GM10248 (cell line): ENCODE measurements at regions of chr5 and their contacts with region 1.

Region 1: DNA sequence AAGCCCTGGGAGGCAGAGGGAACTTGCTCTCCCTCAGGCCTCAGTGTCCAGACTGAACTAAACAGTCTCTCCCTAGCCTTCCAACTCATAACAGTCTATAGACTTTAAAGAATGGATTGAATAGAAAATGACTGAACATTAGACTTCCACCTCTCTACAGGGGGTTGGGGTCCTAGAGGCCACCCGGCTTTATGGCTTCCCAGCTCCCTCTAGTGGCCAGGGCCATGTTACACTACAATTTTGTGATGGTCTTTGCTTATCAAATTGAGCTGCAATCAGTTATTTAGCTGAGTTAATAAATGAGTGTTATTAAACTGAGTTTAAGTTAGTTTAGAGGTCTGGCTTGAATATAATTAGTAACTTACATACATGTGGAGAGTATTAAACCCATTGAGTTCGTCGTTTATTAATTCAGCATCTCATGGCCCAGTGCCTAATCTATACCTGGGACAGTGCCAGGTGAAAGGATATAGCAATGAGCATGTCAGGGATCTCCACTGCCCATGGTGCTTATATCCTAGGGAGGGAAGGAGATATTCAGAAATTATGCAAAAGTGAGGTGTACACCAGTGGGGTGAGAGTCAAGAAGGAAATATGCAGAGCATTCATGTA is 105.2 kb downstream of the SH3TC2 start:
- DNase-seq: peak; percentile 54
- CTCF ChIP-seq: peak; percentile 62

Region 2: DNA sequence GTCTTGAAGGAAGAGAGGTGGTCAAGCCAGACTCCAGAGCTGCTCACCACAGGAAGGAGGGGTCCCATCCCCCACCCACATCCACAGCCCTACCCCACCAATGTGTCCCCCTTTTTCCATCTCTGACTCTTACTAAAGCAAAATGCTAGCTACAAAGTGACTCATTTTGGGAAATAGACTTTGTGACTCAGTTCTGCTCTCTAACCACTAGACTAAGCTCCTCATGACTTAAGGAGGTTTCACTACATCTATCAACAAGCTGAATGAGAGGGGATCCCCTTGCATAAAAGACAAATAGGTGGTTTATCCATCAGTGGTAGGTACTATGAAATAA is 166.4 kb before region 1 on chr5:
- CTCF ChIA-PET with region 1: interaction called, 10 read pairs
- POLR2A ChIA-PET with region 1: no interaction called
- DNase-seq: peak; percentile 43
- CTCF ChIP-seq: no peak

Region 3: DNA sequence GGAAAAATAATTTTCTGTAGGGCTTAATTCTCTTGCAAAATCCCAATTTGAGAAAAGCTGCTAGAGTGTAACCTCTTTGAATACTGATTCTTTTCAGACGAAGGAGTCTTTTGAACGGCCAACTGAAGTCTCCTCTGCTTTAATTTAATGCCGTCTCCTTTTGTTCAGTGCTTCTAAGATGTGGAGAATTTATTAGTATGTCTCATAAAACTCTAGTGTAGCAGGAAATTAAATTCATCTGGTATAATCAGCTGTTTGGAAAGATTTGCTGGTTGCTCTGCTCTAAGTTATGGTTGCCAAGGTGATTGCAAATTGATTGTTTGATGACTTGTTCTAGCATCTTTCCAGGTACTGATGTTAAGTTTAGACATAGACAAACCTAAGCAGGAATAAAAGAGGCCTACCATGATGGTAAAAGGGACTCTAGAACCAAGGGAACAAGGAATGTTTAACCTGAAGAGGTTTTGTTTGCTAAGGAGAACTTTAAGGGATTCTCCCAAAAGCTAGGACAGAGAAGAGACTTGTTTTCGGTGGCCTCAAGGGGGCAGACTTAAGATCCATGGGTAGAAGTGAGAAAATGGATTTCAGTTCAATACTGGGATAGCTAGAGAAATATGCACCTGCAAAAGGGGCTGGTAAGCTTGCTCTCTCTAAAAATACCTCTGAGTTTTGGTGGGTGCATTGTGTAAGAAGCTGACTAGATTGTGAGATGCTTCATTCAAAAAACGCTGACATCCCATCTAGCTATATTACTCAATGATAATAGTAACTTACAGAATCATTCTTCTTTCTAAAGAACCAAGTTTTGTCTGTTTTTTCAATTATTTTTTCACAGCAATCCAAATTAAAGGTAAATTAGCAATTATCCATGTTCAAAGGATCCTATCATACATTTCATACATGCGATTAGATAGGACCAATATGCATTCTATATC is 137.0 kb before region 1 on chr5:
- CTCF ChIA-PET with region 1: interaction called, 11 read pairs
- POLR2A ChIA-PET with region 1: no interaction called
- DNase-seq: no peak
- CTCF ChIP-seq: peak; percentile 52

Region 4: DNA sequence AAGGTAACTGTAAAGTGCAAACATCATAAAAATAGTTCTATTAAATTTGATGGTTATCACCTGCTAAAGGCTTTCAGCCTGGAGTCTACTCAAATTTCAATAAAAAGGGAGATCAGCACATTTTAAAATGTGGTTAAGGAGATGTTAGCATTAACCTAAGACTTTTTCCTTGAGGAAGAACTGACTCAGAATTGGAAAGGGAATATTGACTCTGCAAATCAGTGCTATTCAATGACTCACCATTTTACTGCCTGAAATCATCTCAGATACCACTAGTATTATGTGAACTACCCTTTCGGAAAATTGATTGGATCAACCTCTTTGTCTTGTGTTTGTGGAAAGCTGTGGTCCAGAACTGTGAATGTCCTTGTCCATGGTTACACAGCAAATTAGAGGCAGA is 18.0 kb before region 1 on chr5:
- CTCF ChIA-PET with region 1: interaction called, 11 read pairs
- POLR2A ChIA-PET with region 1: no interaction called
- DNase-seq: no peak
- CTCF ChIP-seq: no peak

Region 5: GRCh38 chr5:148972958-148973357 is 15.3 kb after region 1 on chr5:
- CTCF ChIA-PET with region 1: interaction called, 21 read pairs
- POLR2A ChIA-PET with region 1: no interaction called
- DNase-seq: no peak
- CTCF ChIP-seq: no peak

Region 6: DNA sequence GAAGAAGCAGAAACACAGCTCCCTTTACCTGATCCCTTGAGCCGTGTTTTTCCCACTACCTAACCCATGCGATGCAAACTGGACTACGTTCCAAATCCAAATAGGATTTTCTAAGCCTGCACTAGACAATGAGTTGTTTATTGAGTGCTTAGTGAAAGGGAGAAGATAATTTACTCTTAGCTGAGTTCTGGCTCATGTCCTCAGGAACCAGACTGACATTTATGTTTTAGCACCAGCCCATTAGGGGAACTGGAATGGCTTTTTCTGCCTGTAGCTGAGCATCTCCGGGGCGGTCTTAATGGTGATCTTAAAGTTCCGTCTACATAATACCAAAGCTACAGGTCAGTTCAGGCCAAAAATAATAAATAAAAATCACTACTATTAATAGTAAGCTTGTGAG is 23.7 kb after region 1 on chr5:
- CTCF ChIA-PET with region 1: interaction called, 21 read pairs
- POLR2A ChIA-PET with region 1: no interaction called
- DNase-seq: no peak
- CTCF ChIP-seq: no peak

Region 7: DNA sequence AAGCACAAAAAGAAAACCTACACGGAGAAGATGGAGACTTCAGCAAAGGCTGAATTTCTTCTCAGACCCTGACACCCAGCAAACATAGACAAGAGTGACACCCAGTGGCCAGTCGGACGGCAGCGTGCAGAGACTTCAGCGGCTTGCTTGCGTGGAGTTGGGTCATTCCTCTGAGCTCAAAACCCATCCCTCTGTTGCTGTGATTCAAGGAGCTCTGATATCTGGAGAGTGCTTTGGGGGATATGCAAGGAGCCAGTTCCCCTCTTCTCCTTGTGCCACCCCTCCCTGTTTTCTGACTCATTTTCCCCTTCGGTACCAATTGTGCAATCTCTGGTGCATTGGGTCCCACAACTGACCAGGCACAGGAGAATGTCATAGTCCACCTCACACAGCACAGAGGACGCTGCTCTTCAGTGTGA is 77.7 kb after region 1 on chr5:
- CTCF ChIA-PET with region 1: interaction called, 18 read pairs
- POLR2A ChIA-PET with region 1: no interaction called
- DNase-seq: peak; percentile 54
- CTCF ChIP-seq: peak; percentile 85